ENCODE measurements at regions of chr12 and their contacts with region 1.

Region 1: DNA sequence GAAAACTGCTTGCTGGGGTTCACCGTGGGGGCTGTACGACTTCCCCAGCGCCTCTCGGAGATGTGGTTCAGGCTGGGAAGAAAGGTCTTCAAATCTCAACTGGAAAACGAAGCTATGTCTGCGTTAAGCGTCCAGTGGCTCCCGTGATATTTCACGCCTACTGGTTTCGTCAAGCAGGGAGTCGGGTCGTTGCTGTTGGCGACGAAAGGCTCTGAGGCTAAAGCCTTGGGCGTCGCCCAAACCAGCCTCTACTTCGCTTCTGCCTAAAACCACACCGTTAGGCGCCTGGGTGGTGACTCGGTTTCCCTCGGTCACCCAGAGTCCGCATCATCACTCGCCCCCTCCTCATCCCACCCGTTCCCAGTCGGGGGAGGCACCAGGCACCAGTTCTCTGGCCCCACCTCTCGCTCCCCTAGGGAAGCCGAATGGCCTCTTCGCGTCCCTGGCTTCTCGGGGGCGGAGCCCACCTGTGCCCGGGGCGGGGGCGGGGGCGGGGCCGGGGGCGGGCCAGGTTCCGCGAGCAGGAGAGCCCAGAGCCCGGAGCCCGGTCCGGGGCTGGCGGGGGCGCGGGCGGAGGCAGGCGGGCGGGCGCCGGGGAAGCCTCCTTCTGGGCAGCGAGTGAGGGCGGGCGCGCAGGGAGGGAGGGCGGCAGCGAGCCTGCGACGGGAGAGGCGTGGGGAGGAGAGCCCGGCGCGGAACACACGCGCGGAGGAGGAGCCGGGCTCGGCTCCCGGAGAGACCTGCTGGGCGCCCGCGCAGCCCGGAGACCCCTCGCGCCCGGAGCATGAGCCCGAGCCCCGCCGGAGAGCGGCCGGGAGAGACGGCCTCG is at the start of gene B4GALNT3:
- DNase-seq: peak; percentile 82
- ATAC-seq: peak; percentile 76
- total RNA-seq, gene B4GALNT3: 49.6 TPM

Region 2: DNA sequence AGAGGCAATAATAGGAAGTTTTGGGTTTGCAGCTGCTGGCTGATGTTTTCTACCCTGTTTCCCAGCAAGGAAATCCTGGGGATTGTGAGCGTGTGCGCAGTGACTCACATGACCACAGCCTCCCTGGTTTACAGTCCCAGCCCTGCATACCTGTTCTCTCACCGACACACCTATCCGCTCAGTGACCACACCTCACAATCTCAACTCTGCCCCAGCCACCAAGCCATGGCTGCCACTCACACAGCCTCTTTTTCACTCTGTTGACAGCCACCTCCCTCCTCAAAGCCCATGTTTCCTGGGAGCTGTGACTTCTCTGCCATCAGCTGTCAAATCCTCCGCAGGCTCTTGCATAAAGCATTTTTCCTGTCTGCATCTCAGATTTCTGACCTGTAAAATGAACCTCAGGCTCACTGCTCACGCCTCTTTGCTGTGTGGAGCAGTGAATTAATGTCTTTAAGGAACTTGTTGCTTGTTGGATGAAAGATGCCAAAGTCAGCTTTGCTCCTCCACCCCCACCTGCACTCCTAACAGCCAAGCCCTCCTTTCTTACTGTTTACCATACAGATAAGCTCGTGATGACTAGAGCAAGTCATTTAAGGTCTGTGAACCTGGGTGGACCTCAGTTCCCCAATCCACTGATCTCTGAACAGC is 43.6 kb after region 1 on chr12:
- intact Hi-C with region 1: loop called (anchors 5 kb)
- DNase-seq: no peak
- ATAC-seq: peak; percentile 59

Region 3: DNA sequence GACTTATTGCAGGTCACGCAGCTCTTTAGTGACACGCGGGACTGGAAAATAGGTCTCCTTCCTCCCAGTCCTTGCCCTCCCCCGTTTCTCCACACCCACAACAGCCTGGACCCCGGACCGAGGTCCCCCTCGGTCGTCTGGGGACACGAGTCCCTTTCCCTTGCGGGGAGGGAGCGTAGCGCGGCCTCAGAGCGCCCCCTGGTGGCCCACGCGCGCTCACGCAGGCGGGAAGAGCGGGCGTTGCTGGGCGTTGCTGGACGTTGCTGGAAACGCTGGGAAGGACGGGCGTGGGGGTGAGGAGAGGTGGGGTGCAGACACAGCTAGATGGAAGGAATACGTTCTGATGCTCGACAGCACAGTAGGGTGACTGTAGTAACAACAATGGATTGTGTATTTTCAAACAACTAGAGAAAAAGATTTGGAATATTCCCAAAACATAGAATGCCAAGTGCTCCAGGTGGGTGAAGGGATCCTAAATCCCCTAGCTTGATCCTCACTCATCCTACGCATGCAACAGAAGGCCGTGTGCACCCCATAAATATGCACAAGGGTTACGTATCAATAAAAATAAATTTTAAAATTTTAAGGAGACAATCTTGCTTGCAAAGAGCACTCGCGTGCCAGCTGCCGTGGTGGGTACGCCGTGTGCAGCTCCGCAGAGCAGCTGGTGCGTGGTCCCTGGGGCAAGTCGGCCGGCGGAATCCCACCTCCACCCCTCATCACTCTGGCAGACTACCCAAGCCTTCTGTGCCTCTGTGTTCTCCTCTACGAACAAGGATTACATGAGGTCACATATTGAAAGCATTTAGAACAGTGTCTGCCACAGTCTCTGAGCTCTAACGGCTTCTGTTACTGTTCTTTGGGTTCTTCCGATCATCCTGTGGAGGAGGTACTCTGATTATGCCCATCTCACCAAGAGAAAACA is 87.5 kb after region 1 on chr12:
- intact Hi-C with region 1: loop called (anchors 5 kb)
- DNase-seq: peak; percentile 81
- ATAC-seq: peak; percentile 47